ENCODE measurements at regions of chr15 and their contacts with region 1.

Region 1: GRCh38 chr15:34209421-34210282 is at the start of gene KATNBL1:
- DNase-seq: peak; percentile 32
- H3K4me3 ChIP-seq: peak within 1 kb of the TSS; percentile 55
- H3K27me3 ChIP-seq: no peaks in the 10 kb centered on the region
- CTCF ChIP-seq: peak; percentile 90
- polyA plus RNA-seq, gene KATNBL1: 17.3 and 28.9 TPM in 2 replicates

Region 2: DNA sequence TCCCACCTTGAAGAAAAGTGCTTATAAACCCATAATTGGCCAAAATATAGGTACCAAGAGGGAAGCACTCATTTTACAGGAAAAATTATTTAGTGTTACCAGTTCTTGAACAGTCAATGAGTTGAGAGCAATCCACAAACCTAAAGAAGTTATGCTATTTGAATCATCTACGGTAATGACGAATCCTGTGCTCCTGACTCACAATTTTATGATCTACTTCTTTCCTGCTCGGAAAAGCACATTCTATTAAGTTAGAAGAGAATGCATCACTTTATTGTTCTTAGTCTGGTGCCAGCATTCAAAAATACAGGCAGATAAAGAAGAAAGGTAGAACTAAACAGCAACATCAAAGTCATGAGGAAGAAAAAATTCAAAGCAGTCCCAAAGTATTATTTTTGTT is 208.1 kb before region 1 on chr15:
- CTCF ChIA-PET with region 1: no interaction called
- POLR2A ChIA-PET with region 1: no interaction called
- DNase-seq: peak; percentile 28
- H3K4me3 ChIP-seq: no peak overlapping the region
- H3K27me3 ChIP-seq: no peaks in the 10 kb centered on the region
- CTCF ChIP-seq: no peak

Region 3: DNA sequence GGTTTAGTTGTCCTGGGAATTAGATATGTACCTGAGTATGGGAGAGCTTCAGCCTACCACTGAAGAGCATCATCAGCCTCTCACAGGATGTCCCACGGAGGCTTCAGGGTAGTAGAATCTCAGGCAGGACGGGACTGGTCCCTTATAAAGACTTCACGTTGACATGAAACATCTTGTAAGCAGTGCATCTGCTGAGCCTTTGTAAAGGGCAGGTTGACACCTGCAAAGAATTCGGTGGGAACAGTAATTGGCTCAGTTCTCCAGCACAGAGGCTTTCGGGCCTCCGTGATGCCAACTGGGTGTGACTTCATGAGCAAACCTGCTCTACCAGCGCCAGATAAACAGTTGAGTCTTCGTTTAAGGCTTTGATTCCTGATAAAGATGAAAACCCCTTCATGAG is 143.7 kb before region 1 on chr15:
- CTCF ChIA-PET with region 1: interaction called, 61 read pairs
- POLR2A ChIA-PET with region 1: no interaction called
- DNase-seq: no peak
- H3K4me3 ChIP-seq: no peak overlapping the region
- H3K27me3 ChIP-seq: no peaks in the 10 kb centered on the region
- CTCF ChIP-seq: no peak

Region 4: GRCh38 chr15:34101366-34102175 is 108.1 kb before region 1 on chr15 and contains the starts of genes EMC7 and PGBD4:
- CTCF ChIA-PET with region 1: interaction called, 6 read pairs
- POLR2A ChIA-PET with region 1: interaction called, 20 read pairs
- DNase-seq: peak; percentile 96
- H3K4me3 ChIP-seq: peak within 1 kb of the TSS; percentile 88
- H3K27me3 ChIP-seq: no peaks in the 10 kb centered on the region
- CTCF ChIP-seq: no peak
- polyA plus RNA-seq, gene EMC7: 80.8 and 126 TPM in 2 replicates
- polyA plus RNA-seq, gene PGBD4: 0.77 and 1.3 TPM in 2 replicates

Region 5: DNA sequence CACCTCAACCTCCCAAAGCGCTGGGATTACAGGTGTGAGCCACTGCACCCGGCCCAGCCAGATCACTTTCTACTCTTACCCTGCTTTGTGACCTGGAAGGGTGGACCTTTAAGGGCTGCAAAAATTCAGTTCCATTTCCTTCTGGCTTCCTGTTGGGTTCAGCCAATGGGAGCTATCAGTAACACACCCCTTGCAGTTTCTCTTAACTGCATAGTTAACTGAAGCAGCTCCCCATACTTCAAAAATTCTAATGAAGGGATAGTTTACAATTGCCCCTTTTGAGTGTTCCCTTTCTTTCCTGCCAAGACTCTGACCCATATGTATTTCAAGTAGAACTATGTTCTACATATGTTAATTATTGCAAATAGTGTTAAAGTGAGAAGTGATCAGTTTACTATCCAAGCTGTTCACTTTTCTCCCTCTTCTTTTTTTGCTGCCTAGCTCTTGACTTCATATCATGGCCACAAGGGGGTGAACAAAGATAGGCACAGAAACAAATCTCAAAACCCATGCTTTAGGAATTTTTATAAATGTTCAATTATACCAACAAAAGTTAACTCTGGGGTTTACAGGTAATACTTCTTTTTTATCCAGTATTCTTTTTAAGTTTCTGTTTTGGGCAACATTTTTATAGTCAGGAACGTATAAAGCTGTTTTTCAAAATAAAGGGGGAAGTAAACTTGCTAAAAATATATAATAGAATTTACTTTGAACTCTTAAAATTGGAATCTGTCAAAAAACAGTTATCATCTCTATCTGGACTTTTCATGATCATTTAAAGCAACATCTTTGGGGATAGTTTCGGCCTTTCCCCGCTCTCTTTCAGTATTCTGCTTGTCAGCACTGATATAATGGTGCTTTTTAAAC is 99.6 kb before region 1 on chr15:
- CTCF ChIA-PET with region 1: interaction called, 124 read pairs
- POLR2A ChIA-PET with region 1: interaction called, 8 read pairs
- DNase-seq: no peak
- H3K4me3 ChIP-seq: no peak overlapping the region
- H3K27me3 ChIP-seq: no peaks in the 10 kb centered on the region; the same call in 1 of the 2 replicates
- CTCF ChIP-seq: peak; percentile 76

Region 6: DNA sequence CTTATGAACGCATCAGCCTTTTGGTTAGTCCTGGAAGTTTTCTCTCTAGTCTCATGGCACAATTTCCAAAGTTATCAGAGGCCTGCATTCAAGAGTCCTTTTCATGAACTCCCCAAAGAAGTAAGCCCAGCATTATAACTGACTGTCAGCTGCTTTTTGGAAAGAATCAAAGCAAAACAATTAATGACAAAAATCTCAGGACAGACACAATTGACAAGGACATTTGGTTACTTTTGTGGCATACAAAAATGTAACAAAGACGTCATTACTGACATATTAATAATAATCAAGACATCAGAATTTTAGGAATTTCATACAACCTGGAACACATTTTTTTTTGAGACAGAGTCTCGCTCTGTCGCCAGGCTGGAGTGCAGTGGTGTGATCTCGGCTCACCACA is 20.9 kb before region 1 on chr15:
- CTCF ChIA-PET with region 1: interaction called, 11 read pairs
- POLR2A ChIA-PET with region 1: no interaction called
- DNase-seq: no peak
- H3K4me3 ChIP-seq: no peak overlapping the region
- H3K27me3 ChIP-seq: no peaks in the 10 kb centered on the region
- CTCF ChIP-seq: no peak

Region 7: GRCh38 chr15:34367101-34368081 is 157.7 kb after region 1 on chr15 and contains the start of gene LPCAT4:
- CTCF ChIA-PET with region 1: interaction called, 10 read pairs
- POLR2A ChIA-PET with region 1: no interaction called
- DNase-seq: peak; percentile 26
- H3K4me3 ChIP-seq: peak within 1 kb of the TSS; percentile 91
- H3K27me3 ChIP-seq: no peaks in the 10 kb centered on the region
- CTCF ChIP-seq: peak; percentile 96
- polyA plus RNA-seq, gene LPCAT4: 29.5 and 45.3 TPM in 2 replicates